Left colon (tissue), 2 donors: ENCODE measurements at regions of chr6 and their contacts with region 1.

Region 1: DNA sequence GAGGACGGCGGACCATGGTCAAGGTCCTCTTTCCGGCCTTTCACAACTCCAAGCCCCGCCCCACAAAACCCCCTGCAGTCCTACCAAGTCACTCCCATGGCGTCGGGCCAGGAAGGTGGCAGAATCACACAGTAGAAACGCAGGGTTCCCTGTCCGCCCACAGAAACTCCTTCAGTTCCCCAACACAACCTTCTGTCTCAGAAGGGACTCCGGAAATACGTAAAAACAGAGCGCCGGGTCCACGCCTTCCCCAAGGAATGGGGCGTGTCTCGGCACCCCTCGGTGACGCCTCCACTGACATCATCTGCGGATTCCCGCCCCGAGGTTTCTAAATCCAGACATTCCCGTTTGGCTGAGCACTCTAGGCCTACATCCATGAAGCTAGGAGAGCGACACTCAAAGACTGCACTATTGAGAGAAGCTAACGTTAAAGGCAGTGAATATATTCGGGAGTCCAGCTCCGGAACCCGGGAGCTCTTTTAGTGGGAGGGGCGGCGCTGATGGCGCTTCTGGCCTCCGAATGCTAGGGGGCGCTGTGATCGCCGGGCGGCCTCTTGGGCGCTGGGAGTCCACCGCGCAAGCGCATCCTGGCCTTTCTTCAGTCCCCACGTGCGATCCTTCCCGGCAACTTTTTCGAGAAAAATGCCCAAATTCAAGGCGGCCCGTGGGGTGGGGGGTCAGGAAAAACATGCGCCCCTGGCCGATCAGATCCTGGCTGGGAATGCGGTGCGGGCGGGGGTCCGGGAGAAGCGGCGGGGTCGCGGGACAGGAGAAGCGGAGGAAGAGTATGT is at the starts of genes BYSL and MED20:
- DNase-seq: peak; percentile 92 to 94
- ATAC-seq: peak; percentile 98
- total RNA-seq, gene BYSL: 8.8 to 10.3 TPM
- total RNA-seq, gene MED20: 18.5 to 18.8 TPM

Region 2: GRCh38 chr6:41787219-41787917 is 133.7 kb before region 1 on chr6 and contains the start of gene TOMM6:
- intact Hi-C with region 1: loop called in 1 of 2 experiments (anchors 5 kb)
- DNase-seq: peak; percentile 95 to 97
- ATAC-seq: peak; percentile 84
- total RNA-seq, gene TOMM6: 97.1 to 98.4 TPM

Region 3: GRCh38 chr6:41805830-41806774 is 115.0 kb before region 1 on chr6:
- intact Hi-C with region 1: no loop called
- DNase-seq: no peak
- ATAC-seq: no peak